ENCODE measurements at regions of chr7 and their contacts with region 1.

Region 1: GRCh38 chr7:39580149-39580874 is 14.1 kb downstream of the YAE1 start:
- DNase-seq: peak; percentile 85
- ATAC-seq: peak; percentile 94

Region 2: DNA sequence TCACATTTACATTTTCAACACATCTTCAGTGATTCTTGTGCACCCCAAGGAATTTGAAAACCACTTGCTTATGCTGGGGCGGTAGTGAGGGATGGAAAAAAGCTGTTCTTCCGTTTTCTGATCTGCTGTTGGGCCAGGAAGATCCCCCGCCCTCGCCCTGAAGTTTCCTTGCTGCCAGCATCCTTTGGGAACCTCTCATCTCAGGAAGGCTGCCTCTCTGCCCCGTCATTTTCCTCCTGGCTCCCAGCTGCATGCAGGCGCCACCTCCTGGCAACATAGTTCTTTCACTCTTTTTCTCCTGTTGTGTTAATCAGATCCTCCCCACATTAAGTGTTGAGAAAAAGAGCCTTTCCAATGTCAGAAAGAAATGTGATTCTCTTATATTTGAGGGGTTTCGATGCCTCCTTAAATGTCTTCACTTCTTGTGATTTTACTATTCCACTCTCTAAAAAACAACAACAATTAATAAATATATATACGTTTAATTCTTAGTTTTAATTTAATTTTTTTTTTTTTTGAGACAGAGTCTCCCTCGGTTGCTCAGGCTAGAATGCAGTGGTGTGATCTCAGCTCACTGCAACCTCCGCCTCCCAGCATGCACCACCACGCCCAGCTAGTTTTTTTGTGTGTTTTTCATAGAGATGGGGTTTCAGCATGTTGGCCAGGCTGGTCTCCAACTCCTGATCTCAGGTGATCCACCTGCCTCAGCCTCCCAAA is 165.9 kb after region 1 on chr7:
- intact Hi-C with region 1: loop called (anchors 10 kb)
- DNase-seq: peak; percentile 87
- ATAC-seq: peak; percentile 87